ENCODE measurements at regions of chr15 and their contacts with region 1.

Region 1: DNA sequence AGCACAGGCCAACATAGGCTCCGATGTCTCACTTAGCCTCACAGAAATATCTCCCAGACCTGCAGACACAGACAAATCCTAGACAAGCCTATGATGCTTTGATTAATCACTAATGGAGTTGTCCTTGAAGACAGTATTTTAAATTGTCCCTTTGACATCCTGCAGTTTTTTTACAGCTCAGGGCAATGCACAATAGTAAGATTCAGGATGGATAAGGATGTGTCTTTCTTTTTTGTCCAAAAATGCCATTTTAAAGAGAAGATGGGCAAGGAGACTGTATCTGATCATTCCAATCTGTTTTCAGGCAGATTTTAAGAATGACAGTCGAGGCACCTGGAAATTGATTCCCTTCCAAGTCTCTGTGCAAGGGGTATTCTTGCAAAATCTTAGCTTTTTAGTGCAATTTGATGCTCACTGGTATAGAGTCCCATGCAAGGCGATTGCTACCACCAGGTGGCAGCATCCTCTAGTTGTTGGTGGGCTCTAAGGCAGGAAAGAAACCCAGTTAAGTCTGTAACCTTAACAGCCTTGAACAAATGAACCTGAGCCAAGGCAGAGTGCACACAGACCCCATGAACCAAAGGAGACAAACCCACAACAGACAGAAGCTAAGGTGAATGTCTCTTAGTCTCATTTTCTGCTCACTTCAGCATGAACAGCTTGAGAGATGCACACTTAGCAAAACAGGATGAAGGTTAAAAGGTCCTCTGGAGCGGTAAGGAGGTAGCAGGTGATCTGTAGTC is 51.2 kb upstream of the MINAR1 start:
- DNase-seq: peak; percentile 42 to 61
- H3K4me3 ChIP-seq: no peak overlapping the region
- H3K27ac ChIP-seq: no peak overlapping the region
- H3K4me1 ChIP-seq: no peaks in the 10 kb centered on the region
- H3K27me3 ChIP-seq: no peaks in the 10 kb centered on the region
- CTCF ChIP-seq: peak; percentile 91

Region 2: DNA sequence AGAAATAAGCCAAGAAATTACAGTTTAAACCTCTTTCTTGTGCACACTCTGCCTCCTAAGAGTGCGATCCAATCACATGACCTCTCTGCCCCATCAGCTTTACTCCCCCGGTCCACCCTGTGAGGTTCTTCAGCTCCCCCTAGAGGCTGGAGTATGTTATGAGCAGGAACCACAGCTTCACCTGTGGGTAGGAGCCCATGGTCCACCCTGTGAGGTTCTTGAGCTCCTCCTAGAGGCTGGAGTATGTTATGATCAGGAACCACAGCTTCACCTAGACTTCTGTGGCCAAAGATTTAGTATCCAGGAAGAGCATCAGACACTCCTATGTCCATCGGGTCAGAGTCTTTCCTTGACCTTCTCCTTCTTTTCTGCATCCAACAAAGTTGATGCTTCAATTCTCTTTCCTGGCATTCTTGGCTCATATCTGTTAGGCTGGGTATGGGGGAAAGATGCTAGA is 215.2 kb after region 1 on chr15:
- CTCF ChIA-PET with region 1: interaction called, 13 read pairs
- POLR2A ChIA-PET with region 1: no interaction called
- intact Hi-C with region 1: loop called (anchors 2 kb)
- DNase-seq: peak; percentile 55 to 78
- H3K4me3 ChIP-seq: no peak overlapping the region
- H3K27ac ChIP-seq: no peak overlapping the region
- H3K4me1 ChIP-seq: no peaks in the 10 kb centered on the region
- H3K27me3 ChIP-seq: peaks cover 62% of the 10 kb centered on the region
- CTCF ChIP-seq: peak; percentile 91

Region 3: DNA sequence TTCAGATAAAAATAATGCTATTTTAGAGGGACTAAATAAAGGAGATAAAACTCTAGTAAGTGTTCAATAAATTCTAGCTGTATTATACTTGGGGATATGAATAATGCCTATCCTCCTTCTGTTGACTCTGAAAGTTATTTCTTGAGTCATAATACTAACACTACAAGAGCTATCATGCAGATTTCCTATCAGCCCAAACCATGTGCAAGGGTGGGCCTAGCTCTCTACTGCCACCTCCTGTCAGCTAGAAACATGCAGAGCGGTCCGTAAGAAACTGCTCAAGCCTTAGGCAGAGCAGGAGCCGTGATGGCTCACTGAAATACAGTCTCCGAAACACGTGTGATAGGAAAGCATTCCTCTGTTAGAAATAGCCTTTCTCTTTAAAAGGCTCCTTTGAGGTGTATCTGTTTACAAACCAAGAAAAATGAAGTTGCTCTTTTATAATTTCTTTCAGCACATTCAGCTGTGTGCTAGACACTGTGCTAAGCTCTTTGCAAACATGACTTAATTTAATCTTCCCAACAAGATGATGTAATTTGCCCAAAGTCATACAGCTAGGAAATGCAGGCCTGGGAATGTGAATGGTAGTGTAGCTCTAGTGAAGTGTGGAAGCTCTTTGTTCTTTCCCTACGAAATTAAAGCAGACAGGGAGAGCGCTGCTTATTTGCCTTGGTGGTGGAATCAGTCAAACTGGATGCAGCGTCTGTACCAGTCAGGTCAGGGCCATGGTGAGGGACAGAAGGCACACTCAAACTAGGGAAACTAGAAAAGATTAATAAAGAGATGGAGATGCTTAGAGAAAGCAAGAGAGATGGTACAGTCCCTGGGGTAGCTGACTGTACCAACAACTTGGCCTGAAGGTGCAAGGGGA is 472.8 kb after region 1 on chr15:
- CTCF ChIA-PET with region 1: interaction called, 3 read pairs
- POLR2A ChIA-PET with region 1: no interaction called
- intact Hi-C with region 1: loop called (anchors 1 kb)
- DNase-seq: peak; percentile 45 to 53
- H3K4me3 ChIP-seq: no peak overlapping the region
- H3K27ac ChIP-seq: no peak overlapping the region
- H3K4me1 ChIP-seq: no peaks in the 10 kb centered on the region
- H3K27me3 ChIP-seq: no peaks in the 10 kb centered on the region
- CTCF ChIP-seq: peak; percentile 83

Region 4: GRCh38 chr15:80636675-80637074 is 1255.7 kb after region 1 on chr15:
- CTCF ChIA-PET with region 1: no interaction called
- POLR2A ChIA-PET with region 1: no interaction called
- intact Hi-C with region 1: no loop called
- DNase-seq: no peak
- H3K4me3 ChIP-seq: no peak overlapping the region
- H3K27ac ChIP-seq: no peak overlapping the region
- H3K4me1 ChIP-seq: no peaks in the 10 kb centered on the region
- H3K27me3 ChIP-seq: no peaks in the 10 kb centered on the region
- CTCF ChIP-seq: no peak

Measured in PC-9 (cell line).